ENCODE measurements at regions of chr3 and their contacts with region 1.

Region 1: GRCh38 chr3:42443819-42444436 is 33.5 kb upstream of the LYZL4 start:
- DNase-seq: peak; percentile 46 to 78 (median 73)
- ATAC-seq: peak; percentile 88
- H3K4me3 ChIP-seq: no peak overlapping the region
- H3K4me3 Mint-ChIP-seq: no peak overlapping the region
- H3K27ac ChIP-seq: no peak overlapping the region
- H3K27ac Mint-ChIP-seq: no peak overlapping the region
- H3K4me1 ChIP-seq: no peaks in the 10 kb centered on the region
- H3K4me1 Mint-ChIP-seq: peaks cover 0 to 3% (median 0%) of the 10 kb centered on the region in 7 donors
- H3K27me3 ChIP-seq: no peaks in the 10 kb centered on the region
- H3K27me3 Mint-ChIP-seq: peaks cover 0 to 16% (median 4%) of the 10 kb centered on the region in 5 donors

Region 2: DNA sequence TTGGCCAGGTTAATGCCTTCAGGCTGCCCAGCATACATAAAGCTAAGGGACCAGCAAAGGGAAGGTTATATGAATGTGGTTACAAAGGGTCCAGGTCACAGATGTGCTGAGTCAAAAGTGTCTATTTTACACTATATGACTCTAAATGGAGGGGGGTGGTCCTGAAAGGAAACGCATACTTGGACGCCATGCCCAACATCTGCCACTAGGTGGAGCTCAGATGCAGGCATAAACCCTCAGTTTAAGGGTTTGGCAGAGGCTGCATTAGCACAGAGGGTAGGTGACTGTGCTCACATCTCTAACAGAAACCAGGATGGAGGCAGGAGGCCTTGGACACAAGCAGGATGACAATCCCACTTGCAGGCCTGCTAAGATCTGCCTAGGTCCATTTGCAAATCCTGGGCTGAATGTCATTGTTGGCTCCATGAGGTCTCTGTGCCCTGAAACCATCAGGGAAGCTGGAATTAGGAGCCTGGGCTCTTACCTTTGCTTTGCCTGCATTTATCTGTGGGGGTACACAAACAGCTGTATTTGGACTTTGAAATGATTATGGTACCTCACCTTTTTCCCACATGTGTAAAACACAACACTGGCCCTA is 1863.3 kb before region 1 on chr3:
- CTCF ChIA-PET with region 1: no interaction called
- POLR2A ChIA-PET with region 1: no interaction called
- intact Hi-C with region 1: loop called in 1 of 2 experiments (anchors 5 kb)
- DNase-seq: peak; percentile 18 to 61 (median 51)
- ATAC-seq: peak; percentile 72
- H3K4me3 ChIP-seq: no peak overlapping the region
- H3K4me3 Mint-ChIP-seq: no peak overlapping the region
- H3K27ac ChIP-seq: no peak overlapping the region
- H3K27ac Mint-ChIP-seq: peak overlapping the region in 1 of 9 donors; percentile 5
- H3K4me1 ChIP-seq: no peaks in the 10 kb centered on the region
- H3K4me1 Mint-ChIP-seq: no peaks in the 10 kb centered on the region
- H3K27me3 ChIP-seq: no peaks in the 10 kb centered on the region
- H3K27me3 Mint-ChIP-seq: peaks cover 0 to 9% (median 4%) of the 10 kb centered on the region in 5 donors

Region 3: DNA sequence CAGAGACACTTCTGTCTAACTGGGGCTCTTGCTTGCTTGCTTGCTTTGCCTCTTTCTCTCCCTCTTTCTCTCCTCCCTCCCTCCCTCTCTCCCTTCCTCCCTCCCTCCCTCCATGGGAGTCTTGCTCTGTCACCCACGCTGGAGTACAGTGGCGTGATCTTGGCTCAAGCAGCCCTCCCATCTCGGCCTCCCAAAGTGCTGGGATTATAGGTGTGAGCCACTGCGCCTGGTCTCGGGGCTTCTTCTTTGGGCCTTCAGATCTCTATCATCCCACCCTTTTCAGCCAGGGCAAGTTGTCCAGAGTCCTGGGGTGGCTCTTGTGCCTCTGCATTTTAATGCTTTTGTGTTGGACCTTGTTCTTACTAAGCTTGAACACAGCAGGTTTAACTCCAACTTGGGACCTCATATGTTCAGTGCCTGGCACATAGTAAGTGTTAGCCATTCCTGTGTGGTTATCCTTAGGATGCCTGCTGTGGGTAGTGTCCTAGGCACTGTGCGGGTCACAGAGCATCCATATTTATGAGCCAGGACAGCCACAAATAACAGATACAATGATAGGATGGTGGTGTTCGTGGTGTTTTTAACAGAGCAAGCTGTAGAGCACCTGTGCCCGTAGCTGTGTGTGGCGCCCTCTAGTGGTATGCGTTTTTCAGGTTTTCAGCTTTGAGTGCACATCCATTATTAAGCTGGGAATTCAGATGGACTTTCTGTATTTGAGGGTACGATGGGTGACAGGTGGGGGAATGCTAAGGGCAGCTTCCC is 253.0 kb before region 1 on chr3:
- CTCF ChIA-PET with region 1: interaction called, 3 read pairs
- POLR2A ChIA-PET with region 1: no interaction called
- intact Hi-C with region 1: loop called in 1 of 2 experiments (anchors 1 kb)
- DNase-seq: peak; percentile 30 to 70 (median 57)
- ATAC-seq: peak; percentile 75
- H3K4me3 ChIP-seq: no peak overlapping the region
- H3K4me3 Mint-ChIP-seq: no peak overlapping the region
- H3K27ac ChIP-seq: no peak overlapping the region
- H3K27ac Mint-ChIP-seq: peak overlapping the region in 5 of 9 donors; percentile 22 to 69 (median 25)
- H3K4me1 ChIP-seq: peaks cover 5 to 9% of the 10 kb centered on the region in 2 donors
- H3K4me1 Mint-ChIP-seq: peaks cover 8 to 38% (median 15%) of the 10 kb centered on the region in 7 donors
- H3K27me3 ChIP-seq: no peaks in the 10 kb centered on the region
- H3K27me3 Mint-ChIP-seq: no peaks in the 10 kb centered on the region

Region 4: GRCh38 chr3:42247576-42248027 is 196.3 kb before region 1 on chr3:
- CTCF ChIA-PET with region 1: interaction called, 34 read pairs
- POLR2A ChIA-PET with region 1: no interaction called
- intact Hi-C with region 1: loop called (anchors 1 kb)
- DNase-seq: peak in 8 of 9 donors; percentile 39 to 81 (median 66)
- ATAC-seq: peak; percentile 69
- H3K4me3 ChIP-seq: no peak overlapping the region
- H3K4me3 Mint-ChIP-seq: peak overlapping the region in 7 of 10 donors; percentile 15 to 60 (median 30)
- H3K27ac ChIP-seq: no peak overlapping the region
- H3K27ac Mint-ChIP-seq: peak overlapping the region in 5 of 9 donors; percentile 32 to 78 (median 60)
- H3K4me1 ChIP-seq: no peaks in the 10 kb centered on the region
- H3K4me1 Mint-ChIP-seq: peaks cover 2 to 11% (median 8%) of the 10 kb centered on the region in 7 donors
- H3K27me3 ChIP-seq: no peaks in the 10 kb centered on the region
- H3K27me3 Mint-ChIP-seq: peaks cover 0 to 39% (median 0%) of the 10 kb centered on the region in 5 donors

Region 5: GRCh38 chr3:42298259-42298658 is 145.7 kb before region 1 on chr3:
- CTCF ChIA-PET with region 1: no interaction called
- POLR2A ChIA-PET with region 1: no interaction called
- intact Hi-C with region 1: no loop called
- DNase-seq: no peak
- ATAC-seq: no peak
- H3K4me3 ChIP-seq: no peak overlapping the region
- H3K4me3 Mint-ChIP-seq: no peak overlapping the region
- H3K27ac ChIP-seq: no peak overlapping the region
- H3K27ac Mint-ChIP-seq: no peak overlapping the region
- H3K4me1 ChIP-seq: no peaks in the 10 kb centered on the region
- H3K4me1 Mint-ChIP-seq: peaks cover 0 to 5% (median 2%) of the 10 kb centered on the region in 7 donors
- H3K27me3 ChIP-seq: peaks cover 0 to 2% of the 10 kb centered on the region in 2 donors
- H3K27me3 Mint-ChIP-seq: peaks cover 3 to 38% (median 9%) of the 10 kb centered on the region in 5 donors

Region 6: DNA sequence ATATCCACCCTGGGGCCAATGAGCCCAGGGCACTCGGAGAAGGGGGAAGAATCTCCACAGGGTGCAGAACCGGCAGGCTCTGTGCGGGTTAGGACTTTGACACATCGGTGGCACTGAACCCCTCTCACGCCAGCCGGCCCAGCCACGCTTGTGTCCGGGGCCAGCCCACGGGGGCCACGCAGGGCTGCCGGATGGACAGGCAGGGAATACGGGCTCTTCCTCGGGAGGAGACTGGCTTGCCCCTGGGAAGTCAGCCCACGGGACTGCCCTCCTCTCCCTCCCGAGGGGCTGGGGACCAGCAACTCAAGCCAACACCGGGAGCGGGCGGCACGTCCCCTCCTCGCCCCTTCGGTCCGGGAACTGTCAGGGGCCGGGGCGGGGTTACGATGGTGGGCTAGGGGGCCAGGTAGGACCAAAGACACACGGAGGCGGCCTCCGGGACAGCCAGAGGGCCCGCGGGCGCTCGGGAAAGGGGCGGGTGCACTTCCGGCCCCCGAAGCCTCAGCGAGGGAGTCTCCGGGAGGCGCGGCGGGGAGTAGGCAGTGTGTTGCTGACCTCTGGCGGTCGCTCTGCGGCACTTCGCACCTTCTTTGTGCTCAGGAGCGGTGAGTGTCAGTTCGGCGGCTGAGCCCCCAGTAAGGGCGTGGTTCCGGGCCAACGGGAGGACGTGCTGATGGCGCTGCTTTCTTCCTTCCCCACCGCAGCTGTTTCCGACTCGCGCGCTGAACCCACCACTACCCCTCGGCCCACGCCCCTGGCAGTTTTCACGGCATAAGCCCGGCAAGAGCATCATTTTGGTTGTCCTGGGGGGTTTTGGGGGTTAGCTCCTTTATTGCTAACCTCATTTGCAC is 436.9 kb after region 1 on chr3:
- CTCF ChIA-PET with region 1: no interaction called
- POLR2A ChIA-PET with region 1: no interaction called
- intact Hi-C with region 1: loop called in 1 of 2 experiments (anchors 1 kb)
- DNase-seq: peak; percentile 66 to 87 (median 83)
- ATAC-seq: peak; percentile 99
- H3K4me3 ChIP-seq: peak overlapping the region; percentile 64
- H3K4me3 Mint-ChIP-seq: peak overlapping the region; percentile 76 to 89 (median 85)
- H3K27ac ChIP-seq: peak overlapping the region; percentile 57
- H3K27ac Mint-ChIP-seq: peak overlapping the region; percentile 55 to 97 (median 82)
- H3K4me1 ChIP-seq: peaks cover 4 to 13% of the 10 kb centered on the region in 2 donors
- H3K4me1 Mint-ChIP-seq: peaks cover 6 to 17% (median 15%) of the 10 kb centered on the region in 7 donors
- H3K27me3 ChIP-seq: no peaks in the 10 kb centered on the region
- H3K27me3 Mint-ChIP-seq: peaks cover 0 to 25% (median 0%) of the 10 kb centered on the region in 5 donors

Measured in naive thymus-derived CD4-positive, alpha-beta T cell (primary cell).